Common myeloid progenitor, CD34-positive (primary cell): ENCODE measurements at regions of chr11 and their contacts with region 1.

Region 1: GRCh38 chr11:10413268-10413667 is 41.8 kb upstream of the AMPD3 start:
- DNase-seq: peak; percentile 60 to 74 (median 69)
- H3K4me3 ChIP-seq: no peak overlapping the region
- H3K27ac ChIP-seq: no peak overlapping the region
- H3K4me1 ChIP-seq: peaks cover 21 to 70% (median 56%) of the 10 kb centered on the region in 4 experiments
- H3K27me3 ChIP-seq: no peaks in the 10 kb centered on the region

Region 2: GRCh38 chr11:10338287-10338686 is 75.0 kb before region 1 on chr11:
- CTCF ChIA-PET with region 1: no interaction called
- POLR2A ChIA-PET with region 1: no interaction called
- DNase-seq: no peak
- H3K4me3 ChIP-seq: no peak overlapping the region
- H3K27ac ChIP-seq: no peak overlapping the region
- H3K4me1 ChIP-seq: no peaks in the 10 kb centered on the region
- H3K27me3 ChIP-seq: no peaks in the 10 kb centered on the region

Region 3: GRCh38 chr11:10455637-10456487 is 42.6 kb after region 1 on chr11:
- CTCF ChIA-PET with region 1: interaction called, 166 read pairs
- POLR2A ChIA-PET with region 1: interaction called, 15 read pairs
- DNase-seq: peak; percentile 78 to 93 (median 87)
- H3K4me3 ChIP-seq: peak overlapping the region; percentile 41 to 86 (median 72)
- H3K27ac ChIP-seq: peak overlapping the region; percentile 52 to 86
- H3K4me1 ChIP-seq: peaks cover 34 to 75% (median 64%) of the 10 kb centered on the region in 4 experiments
- H3K27me3 ChIP-seq: no peaks in the 10 kb centered on the region

Region 4: DNA sequence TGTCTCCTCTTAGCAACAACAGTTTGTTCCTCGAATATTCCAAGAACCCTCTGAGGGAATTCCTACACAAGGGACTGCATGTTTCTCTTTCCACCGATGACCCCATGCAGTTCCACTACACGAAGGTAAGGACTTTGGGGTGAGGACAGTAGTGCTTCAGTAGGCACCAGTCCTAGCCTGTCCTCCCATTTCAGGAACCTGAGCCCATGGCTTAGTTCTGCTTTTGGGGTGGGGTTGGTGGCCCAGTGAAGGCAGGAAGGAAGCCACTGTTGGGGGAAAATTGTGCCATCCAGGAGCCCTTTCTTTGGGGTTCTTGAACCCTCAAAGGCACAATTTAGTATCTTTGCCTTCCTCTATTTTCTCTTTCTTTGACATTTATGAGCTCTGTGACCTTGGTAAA is 89.5 kb after region 1 on chr11:
- CTCF ChIA-PET with region 1: interaction called, 11 read pairs
- POLR2A ChIA-PET with region 1: no interaction called
- DNase-seq: peak in 2 of 3 donors; percentile 14 to 20
- H3K4me3 ChIP-seq: no peak overlapping the region
- H3K27ac ChIP-seq: no peak overlapping the region
- H3K4me1 ChIP-seq: peaks cover 6 to 20% (median 10%) of the 10 kb centered on the region in 4 experiments
- H3K27me3 ChIP-seq: no peaks in the 10 kb centered on the region

Region 5: DNA sequence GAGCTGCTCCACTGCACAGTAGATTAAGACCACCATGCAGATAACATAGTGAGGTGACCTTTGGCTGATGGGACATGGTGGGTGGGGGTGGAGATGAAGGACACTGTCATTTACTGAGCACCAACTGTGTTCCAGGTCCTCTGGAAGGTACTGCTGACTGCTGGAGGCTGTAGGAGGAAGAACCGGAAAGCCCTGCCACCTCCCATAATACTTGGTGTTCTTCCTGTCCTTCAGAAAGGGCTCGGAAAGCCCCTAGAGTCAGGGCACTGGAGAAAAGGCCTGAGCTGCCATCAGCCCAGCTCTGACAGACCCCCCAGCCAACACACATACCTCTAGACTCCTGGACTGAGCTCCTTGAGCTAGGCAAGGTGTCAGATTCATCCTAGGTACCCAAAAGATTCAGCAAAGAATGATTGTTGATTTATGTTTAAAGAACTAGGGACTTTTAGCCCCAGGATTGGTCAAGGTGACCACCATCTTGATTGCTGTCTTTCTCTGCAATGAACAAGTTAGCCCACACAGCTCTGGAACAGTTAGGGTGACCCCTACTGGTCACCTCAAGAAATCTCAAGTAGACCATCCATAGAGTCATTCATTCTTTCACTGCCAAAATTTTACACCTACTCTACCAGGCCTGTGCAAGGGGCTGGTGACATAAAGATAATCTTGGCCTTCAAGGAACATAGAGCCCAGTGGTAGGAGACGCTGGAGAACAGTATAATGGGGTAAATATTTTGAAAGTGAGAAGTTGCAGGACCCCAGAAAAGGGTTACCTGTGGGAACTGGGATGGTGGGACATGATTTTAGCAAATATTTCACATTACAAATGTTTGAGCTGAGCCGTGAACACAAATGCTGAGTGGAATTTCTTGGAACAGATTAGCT is 240.9 kb after region 1 on chr11:
- CTCF ChIA-PET with region 1: interaction called, 18 read pairs
- POLR2A ChIA-PET with region 1: no interaction called
- DNase-seq: peak; percentile 64 to 76 (median 66)
- H3K4me3 ChIP-seq: no peak overlapping the region
- H3K27ac ChIP-seq: no peak overlapping the region
- H3K4me1 ChIP-seq: peaks cover 6 to 40% (median 34%) of the 10 kb centered on the region in 4 experiments
- H3K27me3 ChIP-seq: no peaks in the 10 kb centered on the region